ENCODE measurements at regions of chr3 and their contacts with region 1.

Region 1: GRCh38 chr3:72996473-72997333 is at the start of gene PPP4R2:
- DNase-seq: peak; percentile 91
- ATAC-seq: peak; percentile 89
- H3K4me3 Mint-ChIP-seq: peak within 1 kb of the TSS; percentile 88
- H3K27ac Mint-ChIP-seq: peak within 1 kb of the TSS; percentile 97
- H3K4me1 Mint-ChIP-seq: peaks cover 34% of the 10 kb centered on the region
- H3K27me3 Mint-ChIP-seq: no peaks in the 10 kb centered on the region
- CTCF ChIP-seq: no peak
- total RNA-seq, gene PPP4R2: 85.5 to 88.6 TPM

Region 2: DNA sequence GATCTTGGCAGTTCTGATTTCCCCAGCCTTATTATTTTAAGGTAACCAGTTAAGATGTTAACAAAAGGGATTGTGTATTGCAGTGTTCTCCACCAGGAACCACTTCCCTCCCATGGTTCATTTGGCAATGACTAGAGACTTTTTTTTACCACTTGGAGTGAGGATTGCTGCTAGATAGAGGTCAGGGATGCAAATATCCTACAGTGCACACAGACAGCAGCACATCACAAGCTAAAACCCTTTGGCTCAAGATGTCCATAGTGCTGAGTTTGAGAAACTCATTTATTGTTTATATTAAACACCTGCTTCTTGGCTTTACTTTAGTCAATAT is 40.6 kb after region 1 on chr3:
- CTCF ChIA-PET with region 1: no interaction called
- POLR2A ChIA-PET with region 1: interaction called, 9 read pairs
- intact Hi-C with region 1: loop called (anchors 5 kb)
- DNase-seq: no peak
- ATAC-seq: no peak
- H3K4me3 Mint-ChIP-seq: no peak overlapping the region
- H3K27ac Mint-ChIP-seq: peak overlapping the region; percentile 11
- H3K4me1 Mint-ChIP-seq: peaks cover 82% of the 10 kb centered on the region
- H3K27me3 Mint-ChIP-seq: no peaks in the 10 kb centered on the region
- CTCF ChIP-seq: no peak

Region 3: DNA sequence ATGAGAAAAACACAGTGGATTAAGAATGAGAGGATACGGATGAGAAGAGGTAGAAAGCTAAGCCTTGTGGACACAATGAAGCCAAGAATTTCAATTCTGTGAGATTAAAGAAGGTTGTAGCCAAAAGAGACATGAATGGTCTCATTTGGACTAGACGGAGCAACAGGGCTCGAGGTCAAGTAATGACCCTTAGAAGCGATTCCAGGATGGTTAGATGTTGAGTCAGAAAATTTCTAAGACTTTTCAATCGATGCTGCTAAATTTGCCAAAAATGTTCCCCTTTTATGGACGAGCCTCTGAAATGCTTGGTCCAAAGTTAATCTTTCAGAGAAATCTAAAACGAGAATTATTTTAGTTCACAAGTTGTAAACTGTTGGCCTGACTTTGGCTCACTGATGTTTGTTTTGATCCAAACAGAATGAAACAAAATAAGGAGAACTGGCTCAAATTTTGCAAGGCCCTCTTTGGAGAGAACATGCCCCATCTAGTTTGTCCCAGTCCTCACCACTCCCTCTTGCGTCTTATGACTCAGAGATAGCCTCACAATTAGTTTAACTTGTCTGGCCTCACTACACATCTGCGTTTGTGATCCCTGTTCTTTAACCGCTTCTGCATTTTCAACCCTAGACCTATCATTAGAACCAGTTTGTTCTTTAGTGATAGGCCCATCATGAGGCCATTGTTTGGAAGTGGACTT is 392.6 kb after region 1 on chr3:
- CTCF ChIA-PET with region 1: no interaction called
- POLR2A ChIA-PET with region 1: no interaction called
- intact Hi-C with region 1: no loop called
- DNase-seq: no peak
- ATAC-seq: no peak
- H3K4me3 Mint-ChIP-seq: no peak overlapping the region
- H3K27ac Mint-ChIP-seq: no peak overlapping the region
- H3K4me1 Mint-ChIP-seq: no peaks in the 10 kb centered on the region
- H3K27me3 Mint-ChIP-seq: no peaks in the 10 kb centered on the region
- CTCF ChIP-seq: no peak

Measured in activated CD8-positive, alpha-beta T cell treated with anti-CD3 and anti-CD28 coated beads for 36 hours (primary cell).